ENCODE measurements at regions of chr5 and their contacts with region 1.

Region 1: DNA sequence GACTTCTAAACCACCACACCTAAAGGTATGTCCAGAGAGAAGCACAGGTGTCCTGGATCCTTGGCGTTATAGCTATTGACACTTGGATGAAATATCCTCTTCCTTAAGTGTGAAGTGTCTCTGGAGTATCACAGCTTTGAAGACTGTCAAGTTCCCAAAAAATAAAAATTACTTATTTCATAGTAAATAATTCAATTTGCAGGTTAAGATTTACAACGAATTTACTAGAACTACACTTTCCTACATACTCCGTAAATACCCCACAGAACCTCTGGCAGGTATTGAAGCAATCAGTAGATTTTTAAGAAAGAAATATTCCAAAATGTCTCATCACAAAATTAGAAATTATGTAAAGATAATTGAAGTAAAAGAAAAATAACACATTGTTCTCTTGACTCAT is 27.1 kb upstream of the POC5 start:
- DNase-seq: no peak
- ATAC-seq: no peak
- H3K4me3 ChIP-seq: no peak overlapping the region
- H3K27ac ChIP-seq: no peak overlapping the region
- H3K4me1 ChIP-seq: no peaks in the 10 kb centered on the region
- H3K27me3 ChIP-seq: no peaks in the 10 kb centered on the region
- CTCF ChIP-seq: no peak
- POLR2A ChIP-seq: no peak
- RAD21 ChIP-seq: no peak

Region 2: DNA sequence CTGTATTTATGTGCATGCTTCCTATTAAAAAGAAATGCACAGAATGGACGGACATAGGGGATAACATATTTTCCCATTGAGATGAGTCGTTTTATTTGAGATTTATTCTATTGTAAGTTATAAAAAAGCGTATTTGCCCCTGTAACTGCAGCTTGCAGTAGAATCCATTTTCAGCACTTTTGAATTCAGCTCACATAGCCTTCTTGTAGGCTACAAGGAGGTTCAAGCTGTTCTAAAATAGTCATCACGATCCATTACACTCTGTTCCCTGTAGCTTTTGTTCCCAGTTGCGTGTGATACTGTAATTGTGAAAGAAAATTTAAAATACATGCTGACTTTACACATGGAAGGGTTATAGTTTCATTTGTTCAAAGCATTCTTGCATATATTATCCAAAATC is 13.8 kb after region 1 on chr5:
- CTCF ChIA-PET with region 1: no interaction called
- POLR2A ChIA-PET with region 1: no interaction called
- dilution Hi-C with region 1: no loop called
- in situ Hi-C with region 1: no loop called
- intact Hi-C with region 1: loop called (anchors 1 kb)
- DNase-seq: no peak
- ATAC-seq: no peak
- H3K4me3 ChIP-seq: no peak overlapping the region
- H3K27ac ChIP-seq: no peak overlapping the region
- H3K4me1 ChIP-seq: no peaks in the 10 kb centered on the region
- H3K27me3 ChIP-seq: no peaks in the 10 kb centered on the region
- CTCF ChIP-seq: no peak
- POLR2A ChIP-seq: no peak
- RAD21 ChIP-seq: no peak

Measured in IMR-90 (cell line).